Right ventricle myocardium inferior (tissue), 1 donor: ENCODE measurements at regions of chr2 and their contacts with region 1.

Region 1: GRCh38 chr2:187499941-187500532 is 52.0 kb upstream of the CALCRL start:
- DNase-seq: no peak
- ATAC-seq: peak; percentile 63

Region 2: GRCh38 chr2:187594801-187595200 is 94.8 kb after region 1 on chr2:
- intact Hi-C with region 1: no loop called
- DNase-seq: no peak
- ATAC-seq: no peak

Region 3: DNA sequence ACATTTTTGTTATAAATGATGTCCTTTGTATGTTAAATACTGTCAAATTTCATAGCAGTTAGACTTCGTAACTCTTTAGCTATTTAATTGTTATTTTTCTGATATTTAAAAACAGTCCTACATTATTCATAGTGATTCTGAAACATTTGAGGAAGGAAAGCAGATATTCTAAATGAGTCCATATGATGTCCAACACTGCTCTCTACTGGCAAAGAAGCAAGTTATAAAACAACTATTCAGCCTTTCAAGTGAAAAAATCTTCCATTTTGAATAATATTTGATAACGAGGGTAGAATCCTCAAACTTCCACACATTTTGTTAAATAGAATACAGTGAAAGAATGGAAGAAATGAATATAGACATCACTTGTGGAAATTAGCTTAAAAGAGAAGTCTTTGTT is 1012.4 kb after region 1 on chr2:
- intact Hi-C with region 1: loop called (anchors 10 kb)
- DNase-seq: no peak
- ATAC-seq: no peak